Activated T-helper 2 cell treated with anti-CD3 and anti-CD28 coated beads, Interferon-gamma antibody, Interleukin-2, Interleukin-4, amounts not matched to agents 10 μg/mL and 5 μg/mL and 100 μg/mL, durations not matched to agents 14 hours and 24 hours and 36 hours (primary cell): ENCODE measurements at regions of chr19 and their contacts with region 1.

Region 1: DNA sequence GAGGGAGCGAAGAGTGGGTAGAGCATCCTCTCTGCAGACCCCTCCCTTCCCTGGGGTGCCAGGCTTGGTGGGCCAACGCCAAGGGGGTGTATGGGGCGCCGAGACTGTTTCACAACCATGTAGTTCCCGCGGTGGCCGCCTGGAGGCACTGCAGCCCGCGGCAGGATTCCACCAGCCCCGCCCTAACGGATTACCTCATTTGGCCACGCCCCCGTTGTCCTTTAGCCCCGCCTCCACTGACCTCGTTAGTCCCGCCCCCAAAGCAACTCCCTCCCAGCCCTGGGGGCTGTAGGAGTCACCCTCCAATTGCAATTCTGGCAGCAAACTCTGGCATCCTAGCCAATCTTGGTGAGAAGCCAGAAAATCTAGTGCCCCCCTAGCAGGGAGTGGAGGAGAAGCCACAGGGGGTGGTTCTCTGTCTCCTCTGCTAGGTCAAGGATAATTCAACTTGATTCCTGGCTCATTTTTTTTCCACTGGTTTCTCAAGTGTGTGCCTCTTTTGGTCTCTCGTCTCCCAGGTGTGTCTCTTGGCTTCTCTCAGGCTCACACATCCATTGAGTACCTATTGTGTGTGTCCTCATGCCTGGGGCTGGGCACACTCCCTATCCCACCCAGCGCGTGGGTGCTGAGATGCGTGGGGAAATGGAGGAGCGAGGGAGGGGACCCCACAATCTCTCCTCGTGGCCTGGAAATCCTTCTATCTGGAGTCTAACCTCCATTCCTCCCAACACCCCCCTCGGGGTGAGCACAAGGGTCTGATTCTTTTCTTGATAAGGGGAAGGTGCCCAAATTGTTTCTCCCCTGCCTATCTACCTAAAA is 2.0 kb downstream of the OLFM2 start:
- DNase-seq: peak; percentile 70
- H3K4me3 Mint-ChIP-seq: no peak overlapping the region
- H3K27ac Mint-ChIP-seq: no peak overlapping the region
- H3K4me1 Mint-ChIP-seq: peaks cover 17% of the 10 kb centered on the region
- H3K27me3 Mint-ChIP-seq: peaks cover 40% of the 10 kb centered on the region

Region 2: GRCh38 chr19:9885077-9885552 is 49.2 kb before region 1 on chr19:
- intact Hi-C with region 1: no loop called
- DNase-seq: no peak
- H3K4me3 Mint-ChIP-seq: no peak overlapping the region
- H3K27ac Mint-ChIP-seq: no peak overlapping the region
- H3K4me1 Mint-ChIP-seq: no peaks in the 10 kb centered on the region
- H3K27me3 Mint-ChIP-seq: peaks cover 3% of the 10 kb centered on the region

Region 3: GRCh38 chr19:10000171-10000826 is 66.0 kb after region 1 on chr19:
- intact Hi-C with region 1: loop called (anchors 1 kb)
- DNase-seq: peak; percentile 51
- H3K4me3 Mint-ChIP-seq: no peak overlapping the region
- H3K27ac Mint-ChIP-seq: no peak overlapping the region
- H3K4me1 Mint-ChIP-seq: peaks cover 6% of the 10 kb centered on the region
- H3K27me3 Mint-ChIP-seq: peaks cover 6% of the 10 kb centered on the region

Region 4: GRCh38 chr19:10027158-10027693 is 92.9 kb after region 1 on chr19:
- intact Hi-C with region 1: loop called (anchors 1 kb)
- DNase-seq: no peak
- H3K4me3 Mint-ChIP-seq: no peak overlapping the region
- H3K27ac Mint-ChIP-seq: no peak overlapping the region
- H3K4me1 Mint-ChIP-seq: no peaks in the 10 kb centered on the region
- H3K27me3 Mint-ChIP-seq: peaks cover 14% of the 10 kb centered on the region

Region 5: DNA sequence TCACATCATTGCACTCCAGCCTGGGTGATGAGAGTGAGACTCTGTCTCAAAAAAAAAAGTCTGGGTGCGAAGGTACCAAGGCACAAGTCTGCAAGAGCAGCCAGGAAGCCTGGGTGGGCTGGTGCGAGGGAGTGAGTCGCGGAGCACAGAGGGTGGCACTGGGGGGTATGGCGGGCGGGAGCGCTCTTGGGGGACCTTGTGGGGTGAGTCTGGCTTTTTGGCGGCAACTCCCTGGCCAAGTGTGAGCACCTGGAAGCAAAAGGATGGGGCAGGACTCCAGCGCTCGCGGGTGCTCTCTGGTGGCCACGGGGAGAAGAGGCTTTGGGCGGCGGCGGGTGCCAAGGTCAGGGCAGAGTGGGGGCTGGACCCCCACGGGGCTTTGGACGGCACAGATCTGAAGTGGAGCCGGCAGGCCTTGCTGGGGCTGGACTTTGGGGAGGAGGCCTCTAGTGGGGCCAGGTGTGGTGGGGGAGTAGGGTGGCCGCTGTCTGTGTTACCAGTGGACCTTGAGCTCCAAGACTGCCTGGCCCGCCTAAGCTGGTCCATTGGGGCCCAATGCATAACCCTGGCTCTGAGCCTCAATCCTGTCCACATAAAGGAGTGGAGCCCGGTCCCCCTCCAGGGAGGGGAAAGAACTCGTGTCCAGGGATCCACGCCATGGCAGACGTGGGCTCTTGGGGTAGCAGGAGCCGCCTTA is 178.7 kb after region 1 on chr19:
- intact Hi-C with region 1: loop called (anchors 5 kb)
- DNase-seq: peak; percentile 57
- H3K4me3 Mint-ChIP-seq: peak overlapping the region; percentile 35
- H3K27ac Mint-ChIP-seq: peak overlapping the region; percentile 80
- H3K4me1 Mint-ChIP-seq: peaks cover 27% of the 10 kb centered on the region
- H3K27me3 Mint-ChIP-seq: no peaks in the 10 kb centered on the region

Region 6: DNA sequence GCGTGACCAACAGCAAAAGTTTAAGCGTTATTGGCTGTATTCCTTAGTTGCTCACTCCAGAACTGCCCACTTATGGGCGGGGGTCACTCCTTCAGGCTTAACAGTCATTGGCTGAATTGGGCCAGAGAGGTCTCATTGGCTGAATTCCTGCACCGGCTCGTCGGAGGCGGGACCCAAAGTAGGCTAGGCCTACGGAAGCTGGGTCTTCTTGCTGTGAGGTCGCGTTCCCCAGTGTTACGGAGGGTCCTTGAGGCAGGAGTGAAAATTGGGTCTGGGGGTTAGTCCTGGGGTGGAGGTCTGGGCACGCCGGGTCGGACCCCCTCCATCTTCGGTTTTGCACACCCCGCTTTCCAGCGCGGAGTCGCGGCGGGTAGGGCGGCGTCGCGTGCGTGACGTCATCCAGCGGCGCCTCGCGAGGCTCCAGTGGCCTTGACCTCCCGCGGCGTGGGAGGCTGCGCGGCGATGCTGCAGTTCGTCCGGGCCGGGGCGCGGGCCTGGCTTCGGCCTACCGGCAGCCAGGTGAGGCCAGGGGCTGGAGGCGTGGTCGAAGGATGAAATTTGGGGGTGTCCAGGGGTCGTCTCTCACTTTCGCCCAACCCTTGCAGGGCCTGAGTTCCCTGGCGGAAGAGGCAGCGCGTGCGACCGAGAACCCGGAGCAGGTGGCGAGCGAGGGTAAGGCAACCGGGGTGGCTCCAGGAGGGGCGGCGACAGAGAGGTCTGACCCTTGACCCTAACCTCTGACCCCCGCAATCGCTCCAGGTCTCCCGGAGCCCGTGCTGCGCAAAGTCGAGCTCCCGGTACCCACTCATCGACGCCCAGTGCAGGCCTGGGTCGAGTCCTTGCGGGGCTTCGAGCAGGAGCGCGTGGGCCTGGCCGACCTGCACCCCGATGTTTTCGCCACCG is 317.7 kb after region 1 on chr19 and contains the start of gene MRPL4:
- intact Hi-C with region 1: loop called (anchors 1 kb)
- DNase-seq: peak; percentile 97
- H3K4me3 Mint-ChIP-seq: peak within 1 kb of the TSS; percentile 95
- H3K27ac Mint-ChIP-seq: peak within 1 kb of the TSS; percentile 94
- H3K4me1 Mint-ChIP-seq: peaks cover 2% of the 10 kb centered on the region
- H3K27me3 Mint-ChIP-seq: no peaks in the 10 kb centered on the region
- total RNA-seq, gene MRPL4: 133 and 135 TPM in 2 replicates